ENCODE measurements at regions of chr9 and their contacts with region 1.

Region 1: GRCh38 chr9:73810585-73811215 is 659.0 kb downstream of the ANXA1 start:
- DNase-seq: no peak
- ATAC-seq: no peak
- H3K4me3 ChIP-seq: no peak overlapping the region
- H3K27ac ChIP-seq: no peak overlapping the region
- H3K4me1 ChIP-seq: no peaks in the 10 kb centered on the region
- H3K27me3 ChIP-seq: no peaks in the 10 kb centered on the region
- CTCF ChIP-seq: no peak
- POLR2A ChIP-seq: no peak
- RAD21 ChIP-seq: no peak

Region 2: GRCh38 chr9:72794947-72795346 is 1015.8 kb before region 1 on chr9:
- CTCF ChIA-PET with region 1: no interaction called
- POLR2A ChIA-PET with region 1: no interaction called
- dilution Hi-C with region 1: no loop called
- in situ Hi-C with region 1: no loop called
- intact Hi-C with region 1: no loop called
- DNase-seq: no peak
- ATAC-seq: no peak
- H3K4me3 ChIP-seq: no peak overlapping the region
- H3K27ac ChIP-seq: no peak overlapping the region
- H3K4me1 ChIP-seq: no peaks in the 10 kb centered on the region
- H3K27me3 ChIP-seq: no peaks in the 10 kb centered on the region
- CTCF ChIP-seq: no peak
- POLR2A ChIP-seq: no peak
- RAD21 ChIP-seq: no peak

Region 3: GRCh38 chr9:73753171-73753570 is 57.5 kb before region 1 on chr9:
- CTCF ChIA-PET with region 1: no interaction called
- POLR2A ChIA-PET with region 1: no interaction called
- dilution Hi-C with region 1: no loop called
- in situ Hi-C with region 1: no loop called
- intact Hi-C with region 1: loop called (anchors 10 kb)
- DNase-seq: no peak
- ATAC-seq: no peak
- H3K4me3 ChIP-seq: no peak overlapping the region
- H3K27ac ChIP-seq: no peak overlapping the region
- H3K4me1 ChIP-seq: no peaks in the 10 kb centered on the region
- H3K27me3 ChIP-seq: no peaks in the 10 kb centered on the region
- CTCF ChIP-seq: no peak
- POLR2A ChIP-seq: no peak
- RAD21 ChIP-seq: no peak

Measured in IMR-90 (cell line).